ENCODE measurements at regions of chrX and their contacts with region 1.

Region 1: DNA sequence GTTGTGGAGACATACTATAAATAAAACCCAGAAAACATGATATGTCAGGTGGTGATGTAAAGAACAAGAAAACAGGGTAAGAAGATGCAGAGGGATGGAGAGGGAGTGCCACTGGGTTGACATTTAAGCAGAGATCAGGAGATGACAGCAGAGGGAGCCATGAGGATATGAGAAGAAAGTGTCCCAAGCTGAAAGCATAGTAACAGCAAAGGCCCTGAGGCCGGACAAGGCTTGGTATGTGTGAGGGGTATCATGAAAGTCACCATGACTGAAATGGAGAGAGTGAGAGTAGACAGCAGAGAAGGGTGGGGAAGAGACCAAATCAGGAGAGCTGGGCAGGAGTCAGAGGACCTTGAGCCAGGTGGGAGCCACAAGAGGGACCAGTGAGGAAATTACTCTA is 3.4 kb downstream of the GPKOW start:
- DNase-seq: no peak
- H3K4me3 Mint-ChIP-seq: no peak overlapping the region
- H3K27ac Mint-ChIP-seq: no peak overlapping the region
- H3K4me1 Mint-ChIP-seq: peaks cover 35% of the 10 kb centered on the region
- H3K27me3 Mint-ChIP-seq: no peaks in the 10 kb centered on the region

Region 2: GRCh38 chrX:49073601-49074571 is 46.2 kb before region 1 on chrX and contains the start of gene PRAF2:
- CTCF ChIA-PET with region 1: no interaction called
- intact Hi-C with region 1: loop called (anchors 2 kb)
- DNase-seq: peak; percentile 94
- H3K4me3 Mint-ChIP-seq: peak within 1 kb of the TSS; percentile 80
- H3K27ac Mint-ChIP-seq: peak within 1 kb of the TSS; percentile 76
- H3K4me1 Mint-ChIP-seq: peaks cover 22% of the 10 kb centered on the region
- H3K27me3 Mint-ChIP-seq: no peaks in the 10 kb centered on the region
- total RNA-seq, gene PRAF2: 14.5 to 14.8 TPM

Region 3: GRCh38 chrX:49100704-49101628 is 19.1 kb before region 1 on chrX:
- CTCF ChIA-PET with region 1: no interaction called
- intact Hi-C with region 1: loop called (anchors 1 kb)
- DNase-seq: peak; percentile 90
- H3K4me3 Mint-ChIP-seq: peak overlapping the region; percentile 90
- H3K27ac Mint-ChIP-seq: peak overlapping the region; percentile 89
- H3K4me1 Mint-ChIP-seq: peaks cover 8% of the 10 kb centered on the region
- H3K27me3 Mint-ChIP-seq: no peaks in the 10 kb centered on the region

Region 4: GRCh38 chrX:49155900-49156837 is 36.1 kb after region 1 on chrX:
- CTCF ChIA-PET with region 1: interaction called, 5 read pairs
- intact Hi-C with region 1: loop called (anchors 1 kb)
- DNase-seq: peak; percentile 88
- H3K4me3 Mint-ChIP-seq: peak overlapping the region; percentile 92
- H3K27ac Mint-ChIP-seq: peak overlapping the region; percentile 97
- H3K4me1 Mint-ChIP-seq: peaks cover 11% of the 10 kb centered on the region
- H3K27me3 Mint-ChIP-seq: no peaks in the 10 kb centered on the region

Region 5: DNA sequence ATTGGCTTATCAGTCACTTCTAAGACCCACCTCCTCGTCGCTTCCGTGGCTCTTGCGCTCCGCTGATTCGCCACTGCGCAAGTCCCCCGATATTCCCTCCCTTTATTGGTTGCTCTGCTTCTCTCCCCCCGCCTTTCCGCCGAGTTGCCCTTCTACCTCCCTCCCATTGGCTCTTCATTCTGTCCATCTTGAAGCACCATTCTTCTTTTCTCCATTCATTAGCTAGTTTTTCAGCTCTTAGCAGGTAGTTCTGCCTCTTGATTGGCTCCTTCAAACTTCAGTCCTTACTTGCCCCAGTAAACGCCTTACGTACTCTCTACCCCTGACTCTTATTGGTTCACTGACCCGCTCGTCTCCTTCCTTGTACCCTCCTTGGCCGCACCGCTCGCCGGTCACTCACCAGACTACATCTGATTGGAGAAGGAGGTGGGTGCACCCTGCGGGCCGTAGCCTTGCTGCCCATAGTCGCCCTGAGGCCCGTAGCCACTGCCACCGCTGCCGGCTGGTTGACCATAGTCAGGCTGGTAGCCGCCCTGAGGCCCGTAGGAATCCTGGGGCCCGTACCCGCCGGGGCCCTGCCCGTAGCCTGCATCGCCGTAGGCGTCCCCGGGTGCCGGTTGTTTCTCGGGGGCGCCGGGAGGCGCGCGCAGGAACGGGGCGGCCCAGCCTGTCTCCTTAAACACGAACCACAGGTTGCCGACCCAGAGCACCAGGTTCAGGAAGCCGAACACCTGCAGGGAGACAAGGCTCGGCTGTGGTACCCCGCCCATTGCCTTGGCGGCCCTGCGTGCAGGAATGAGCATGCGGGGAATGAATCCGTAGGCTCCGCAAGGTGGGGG is 71.2 kb after region 1 on chrX:
- CTCF ChIA-PET with region 1: no interaction called
- intact Hi-C with region 1: loop called (anchors 2 kb)
- DNase-seq: peak; percentile 89
- H3K4me3 Mint-ChIP-seq: peak overlapping the region; percentile 97
- H3K27ac Mint-ChIP-seq: peak overlapping the region; percentile 94
- H3K4me1 Mint-ChIP-seq: peaks cover 25% of the 10 kb centered on the region
- H3K27me3 Mint-ChIP-seq: no peaks in the 10 kb centered on the region